ENCODE measurements at regions of chr2 and their contacts with region 1.

Region 1: GRCh38 chr2:120174963-120175581 is 48.1 kb downstream of the TMEM185B start:
- DNase-seq: peak; percentile 72
- ATAC-seq: no peak
- H3K4me3 ChIP-seq: no peak overlapping the region
- H3K4me3 Mint-ChIP-seq: no peak overlapping the region
- H3K27ac ChIP-seq: no peak overlapping the region
- H3K27ac Mint-ChIP-seq: peak overlapping the region; percentile 64
- H3K4me1 ChIP-seq: peaks cover 40 to 43% of the 10 kb centered on the region in 2 donors
- H3K4me1 Mint-ChIP-seq: peaks cover 42% of the 10 kb centered on the region
- H3K27me3 ChIP-seq: no peaks in the 10 kb centered on the region
- H3K27me3 Mint-ChIP-seq: no peaks in the 10 kb centered on the region
- CTCF ChIP-seq: peak; percentile 94

Region 2: GRCh38 chr2:118580651-118581050 is 1594.4 kb before region 1 on chr2:
- CTCF ChIA-PET with region 1: no interaction called
- POLR2A ChIA-PET with region 1: no interaction called
- intact Hi-C with region 1: no loop called
- DNase-seq: no peak
- ATAC-seq: no peak
- H3K4me3 ChIP-seq: no peak overlapping the region
- H3K4me3 Mint-ChIP-seq: no peak overlapping the region
- H3K27ac ChIP-seq: no peak overlapping the region
- H3K27ac Mint-ChIP-seq: no peak overlapping the region
- H3K4me1 ChIP-seq: no peaks in the 10 kb centered on the region
- H3K4me1 Mint-ChIP-seq: no peaks in the 10 kb centered on the region
- H3K27me3 ChIP-seq: no peaks in the 10 kb centered on the region
- H3K27me3 Mint-ChIP-seq: peaks cover 2% of the 10 kb centered on the region
- CTCF ChIP-seq: no peak

Region 3: DNA sequence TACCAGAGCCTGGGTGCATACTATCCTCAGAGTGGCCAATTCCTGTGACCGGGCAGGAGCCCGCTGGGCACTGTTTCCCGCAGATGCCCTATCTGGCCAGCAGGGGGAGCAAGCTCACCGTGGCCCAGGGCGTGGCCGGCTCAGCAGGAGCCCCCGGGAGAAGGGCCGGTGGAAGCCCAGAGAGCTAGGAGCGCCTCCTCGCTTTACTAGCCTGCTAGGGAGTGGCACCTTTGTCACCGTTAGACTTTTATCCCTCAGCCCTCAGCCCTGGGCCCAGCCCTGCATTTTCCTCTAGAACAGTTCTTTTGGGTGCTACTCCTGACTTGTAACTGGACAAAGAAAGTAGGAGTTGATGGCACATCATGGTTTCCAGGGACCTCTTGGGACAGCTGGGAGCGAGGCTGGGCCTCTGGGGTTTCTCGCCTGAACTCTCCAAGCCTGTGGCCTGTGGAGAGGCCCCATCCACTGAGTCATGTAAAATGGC is 472.1 kb before region 1 on chr2:
- CTCF ChIA-PET with region 1: interaction called, 91 read pairs
- POLR2A ChIA-PET with region 1: no interaction called
- intact Hi-C with region 1: loop called (anchors 1 kb)
- DNase-seq: peak; percentile 70
- ATAC-seq: peak; percentile 97
- H3K4me3 ChIP-seq: no peak overlapping the region
- H3K4me3 Mint-ChIP-seq: no peak overlapping the region
- H3K27ac ChIP-seq: no peak overlapping the region
- H3K27ac Mint-ChIP-seq: no peak overlapping the region
- H3K4me1 ChIP-seq: peaks cover 0 to 5% of the 10 kb centered on the region in 2 donors
- H3K4me1 Mint-ChIP-seq: no peaks in the 10 kb centered on the region
- H3K27me3 ChIP-seq: peaks cover 0 to 10% (median 4%) of the 10 kb centered on the region in 4 experiments
- H3K27me3 Mint-ChIP-seq: peaks cover 3% of the 10 kb centered on the region
- CTCF ChIP-seq: peak; percentile 97

Region 4: DNA sequence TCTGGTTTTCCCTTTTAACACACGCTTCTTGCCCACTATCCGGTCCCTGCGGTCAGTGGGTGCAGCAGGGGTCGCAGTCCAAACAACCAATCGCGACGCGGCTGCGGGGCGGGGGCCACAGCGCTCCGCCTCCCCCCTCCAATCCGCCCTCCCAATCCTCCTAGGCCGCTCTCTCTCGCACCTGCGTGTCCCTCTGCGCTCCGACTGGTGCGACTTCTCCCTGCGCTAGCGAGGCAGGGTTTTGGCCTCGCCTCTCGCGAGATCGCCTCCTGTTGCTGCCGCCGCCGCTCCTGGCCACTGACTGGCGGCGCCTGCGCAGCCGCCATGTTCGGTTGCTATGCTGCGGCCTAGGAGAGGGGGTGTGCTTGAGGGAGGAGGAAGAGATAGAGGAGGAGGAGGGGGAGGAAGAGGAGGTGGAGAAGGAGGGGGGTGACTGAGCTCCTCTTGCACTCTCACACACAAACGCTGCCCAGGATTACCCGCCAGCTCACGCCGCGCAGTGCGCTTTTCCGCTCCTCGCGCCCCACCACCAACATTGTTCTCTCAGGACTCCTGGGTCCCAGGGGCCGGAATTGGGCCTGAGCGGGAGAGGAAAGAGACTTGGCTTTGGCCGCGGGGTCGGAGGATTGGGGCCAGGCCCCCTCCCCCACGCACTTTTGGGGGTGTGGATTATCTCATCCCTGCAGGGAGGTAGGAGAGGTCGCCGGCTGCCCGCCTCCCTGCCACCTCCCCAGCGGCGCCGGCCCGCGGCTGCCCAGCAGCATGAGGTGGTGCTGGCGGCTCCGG is 415.4 kb before region 1 on chr2 and contains the start of gene PTPN4:
- CTCF ChIA-PET with region 1: interaction called, 174 read pairs
- POLR2A ChIA-PET with region 1: interaction called, 10 read pairs
- intact Hi-C with region 1: loop called (anchors 1 kb)
- DNase-seq: peak; percentile 99
- ATAC-seq: peak; percentile 87
- H3K4me3 ChIP-seq: peak within 1 kb of the TSS; percentile 77 to 96 (median 88)
- H3K4me3 Mint-ChIP-seq: peak within 1 kb of the TSS; percentile 96
- H3K27ac ChIP-seq: peak within 1 kb of the TSS; percentile 73 to 84
- H3K27ac Mint-ChIP-seq: peak within 1 kb of the TSS; percentile 95
- H3K4me1 ChIP-seq: peaks cover 16 to 28% of the 10 kb centered on the region in 2 donors
- H3K4me1 Mint-ChIP-seq: peaks cover 42% of the 10 kb centered on the region
- H3K27me3 ChIP-seq: no peaks in the 10 kb centered on the region
- H3K27me3 Mint-ChIP-seq: no peaks in the 10 kb centered on the region
- CTCF ChIP-seq: no peak
- total RNA-seq, gene PTPN4: 54.8 and 66.4 TPM in 2 replicates

Region 5: DNA sequence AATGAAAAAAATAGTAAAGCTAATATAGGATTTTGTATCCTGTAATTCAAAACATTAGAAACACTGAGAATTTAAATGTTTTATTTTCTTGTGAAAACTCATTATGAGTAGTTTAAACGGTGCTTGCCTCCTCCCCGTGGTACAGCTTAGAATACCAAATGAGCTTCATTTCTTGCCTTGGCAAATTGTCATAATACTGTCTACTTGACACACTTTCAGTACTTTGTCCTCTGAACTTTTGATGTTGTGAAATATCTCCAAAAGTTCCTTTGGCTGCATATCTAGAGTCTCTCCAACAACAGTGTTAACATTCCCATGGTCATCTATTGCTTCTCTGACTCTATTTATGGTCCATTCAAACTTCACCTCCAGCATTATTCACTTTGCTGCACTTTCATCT is 224.1 kb before region 1 on chr2:
- CTCF ChIA-PET with region 1: no interaction called
- POLR2A ChIA-PET with region 1: no interaction called
- intact Hi-C with region 1: no loop called
- DNase-seq: no peak
- ATAC-seq: no peak
- H3K4me3 ChIP-seq: no peak overlapping the region
- H3K4me3 Mint-ChIP-seq: no peak overlapping the region
- H3K27ac ChIP-seq: no peak overlapping the region
- H3K27ac Mint-ChIP-seq: no peak overlapping the region
- H3K4me1 ChIP-seq: no peaks in the 10 kb centered on the region
- H3K4me1 Mint-ChIP-seq: no peaks in the 10 kb centered on the region
- H3K27me3 ChIP-seq: no peaks in the 10 kb centered on the region
- H3K27me3 Mint-ChIP-seq: no peaks in the 10 kb centered on the region
- CTCF ChIP-seq: no peak

Region 6: GRCh38 chr2:120109186-120110061 is 65.6 kb before region 1 on chr2:
- CTCF ChIA-PET with region 1: interaction called, 56 read pairs
- POLR2A ChIA-PET with region 1: no interaction called
- intact Hi-C with region 1: loop called (anchors 1 kb)
- DNase-seq: peak; percentile 48
- ATAC-seq: peak; percentile 49
- H3K4me3 ChIP-seq: peak overlapping the region in 2 of 5 experiments; percentile 20 to 21
- H3K4me3 Mint-ChIP-seq: peak overlapping the region; percentile 61
- H3K27ac ChIP-seq: peak overlapping the region in 1 of 2 donors; percentile 52
- H3K27ac Mint-ChIP-seq: peak overlapping the region; percentile 38
- H3K4me1 ChIP-seq: peaks cover 12 to 13% of the 10 kb centered on the region in 2 donors
- H3K4me1 Mint-ChIP-seq: peaks cover 17% of the 10 kb centered on the region
- H3K27me3 ChIP-seq: no peaks in the 10 kb centered on the region
- H3K27me3 Mint-ChIP-seq: no peaks in the 10 kb centered on the region
- CTCF ChIP-seq: peak; percentile 68

Region 7: DNA sequence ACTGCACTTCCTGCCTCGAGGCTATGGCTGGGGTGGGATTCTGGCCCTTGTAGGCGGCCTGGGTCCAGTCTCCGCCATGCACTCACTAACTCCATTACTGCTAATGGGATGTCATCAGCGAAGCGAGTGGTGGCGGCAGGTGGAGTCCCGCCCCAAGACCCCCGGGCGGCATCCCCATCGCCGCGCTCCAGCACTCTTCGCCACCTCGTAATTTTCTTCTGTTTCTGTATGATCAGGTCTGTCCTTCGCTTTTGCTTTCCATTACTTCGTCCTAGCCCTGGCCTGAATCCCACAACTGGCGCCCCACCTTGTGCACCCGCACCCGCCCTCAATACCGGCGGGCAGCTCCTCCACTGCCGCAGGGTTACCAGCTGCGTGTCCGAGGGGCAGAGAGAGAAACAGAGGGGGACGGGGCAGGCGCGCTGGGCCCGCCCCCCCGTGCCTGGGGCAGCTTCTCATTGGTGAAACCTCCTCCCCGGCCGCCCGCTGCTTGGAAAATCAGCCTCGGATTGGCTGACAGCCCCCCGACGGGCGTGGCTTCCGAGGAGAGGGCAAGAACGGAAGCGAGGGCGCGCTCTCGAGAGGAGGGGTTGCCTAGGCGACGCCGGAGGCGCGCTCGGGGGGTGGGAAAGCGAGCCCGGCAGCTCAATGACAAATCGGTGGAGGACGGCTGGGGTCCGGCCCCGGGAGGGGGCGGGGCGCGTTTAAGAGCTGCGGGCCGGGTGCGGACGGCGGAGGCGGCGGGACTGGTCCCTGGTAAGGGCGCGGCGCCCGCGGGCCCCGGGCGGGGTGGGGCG is 77.4 kb after region 1 on chr2 and contains the start of gene RALB:
- CTCF ChIA-PET with region 1: interaction called, 29 read pairs
- POLR2A ChIA-PET with region 1: interaction called, 9 read pairs
- intact Hi-C with region 1: loop called (anchors 1 kb)
- DNase-seq: peak; percentile 98
- ATAC-seq: peak; percentile 94
- H3K4me3 ChIP-seq: peak within 1 kb of the TSS; percentile 63 to 95 (median 92)
- H3K4me3 Mint-ChIP-seq: peak within 1 kb of the TSS; percentile 98
- H3K27ac ChIP-seq: peak within 1 kb of the TSS; percentile 65 to 73
- H3K27ac Mint-ChIP-seq: peak within 1 kb of the TSS; percentile 96
- H3K4me1 ChIP-seq: peaks cover 51 to 54% of the 10 kb centered on the region in 2 donors
- H3K4me1 Mint-ChIP-seq: peaks cover 60% of the 10 kb centered on the region
- H3K27me3 ChIP-seq: peaks cover 0 to 9% (median 2%) of the 10 kb centered on the region in 4 experiments
- H3K27me3 Mint-ChIP-seq: peaks cover 10% of the 10 kb centered on the region
- CTCF ChIP-seq: no peak
- total RNA-seq, gene RALB: 35.9 and 36.7 TPM in 2 replicates